CD4-positive, alpha-beta T cell (primary cell): ENCODE measurements at regions of chr7 and their contacts with region 1.

Region 1: GRCh38 chr7:26500749-26501352 is 209.2 kb downstream of the SNX10 start:
- DNase-seq: peak in 3 of 14 experiments; percentile 23 to 39 (median 31)
- ATAC-seq: no peak
- H3K4me3 ChIP-seq: no peak overlapping the region
- H3K4me3 Mint-ChIP-seq: no peak overlapping the region
- H3K27ac ChIP-seq: no peak overlapping the region
- H3K27ac Mint-ChIP-seq: no peak overlapping the region
- H3K4me1 ChIP-seq: no peaks in the 10 kb centered on the region
- H3K4me1 Mint-ChIP-seq: no peaks in the 10 kb centered on the region
- H3K27me3 ChIP-seq: peaks cover 3% of the 10 kb centered on the region in 2 experiments
- H3K27me3 Mint-ChIP-seq: peaks cover 8% of the 10 kb centered on the region
- CTCF ChIP-seq: peak; percentile 46

Region 2: DNA sequence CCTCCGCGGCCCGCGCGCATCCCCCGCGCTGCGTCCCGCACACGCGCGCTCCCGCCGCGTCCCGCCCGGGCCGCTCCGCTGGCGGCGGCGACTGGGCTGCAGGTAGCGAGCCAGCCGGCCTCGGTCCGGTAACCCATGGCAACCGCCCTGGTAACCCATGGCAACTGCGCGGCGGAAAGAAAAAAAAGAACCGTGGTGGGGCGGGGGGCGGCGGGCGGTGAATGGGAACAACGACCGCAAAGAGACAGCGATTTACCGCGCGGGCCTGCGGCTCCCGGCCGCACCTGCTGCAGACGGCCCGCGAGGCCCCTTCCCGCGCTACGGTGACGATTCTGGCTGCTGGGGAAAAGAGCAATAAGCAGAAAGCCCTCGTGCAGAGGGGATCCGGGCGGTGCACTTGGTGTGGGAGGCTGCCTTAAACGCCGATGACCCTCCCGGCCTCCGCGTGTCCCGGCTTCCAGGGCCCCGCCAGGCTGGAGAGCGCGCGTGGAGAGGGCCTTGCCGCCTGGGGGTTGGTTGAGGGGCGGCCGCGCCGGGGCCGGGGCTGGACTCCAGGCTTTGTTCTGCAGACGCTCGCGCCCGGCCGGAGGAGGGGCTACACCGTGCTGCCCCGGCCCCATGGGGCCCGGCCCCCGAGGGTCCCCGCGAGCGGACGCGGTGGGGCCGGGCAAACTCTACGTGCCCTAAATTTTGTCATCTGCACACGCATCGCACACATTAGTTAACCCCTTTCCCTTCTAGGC is 124.5 kb before region 1 on chr7:
- CTCF ChIA-PET with region 1: no interaction called
- POLR2A ChIA-PET with region 1: no interaction called
- intact Hi-C with region 1: loop called in 1 of 2 experiments (anchors 5 kb)
- DNase-seq: peak in 7 of 14 experiments; percentile 6 to 61 (median 32)
- ATAC-seq: peak; percentile 25
- H3K4me3 ChIP-seq: peak overlapping the region; percentile 58
- H3K4me3 Mint-ChIP-seq: peak overlapping the region; percentile 84
- H3K27ac ChIP-seq: no peak overlapping the region
- H3K27ac Mint-ChIP-seq: no peak overlapping the region
- H3K4me1 ChIP-seq: peaks cover 17% of the 10 kb centered on the region
- H3K4me1 Mint-ChIP-seq: peaks cover 10% of the 10 kb centered on the region
- H3K27me3 ChIP-seq: peaks cover 6 to 31% of the 10 kb centered on the region in 2 experiments
- H3K27me3 Mint-ChIP-seq: peaks cover 70% of the 10 kb centered on the region
- CTCF ChIP-seq: no peak

Region 3: DNA sequence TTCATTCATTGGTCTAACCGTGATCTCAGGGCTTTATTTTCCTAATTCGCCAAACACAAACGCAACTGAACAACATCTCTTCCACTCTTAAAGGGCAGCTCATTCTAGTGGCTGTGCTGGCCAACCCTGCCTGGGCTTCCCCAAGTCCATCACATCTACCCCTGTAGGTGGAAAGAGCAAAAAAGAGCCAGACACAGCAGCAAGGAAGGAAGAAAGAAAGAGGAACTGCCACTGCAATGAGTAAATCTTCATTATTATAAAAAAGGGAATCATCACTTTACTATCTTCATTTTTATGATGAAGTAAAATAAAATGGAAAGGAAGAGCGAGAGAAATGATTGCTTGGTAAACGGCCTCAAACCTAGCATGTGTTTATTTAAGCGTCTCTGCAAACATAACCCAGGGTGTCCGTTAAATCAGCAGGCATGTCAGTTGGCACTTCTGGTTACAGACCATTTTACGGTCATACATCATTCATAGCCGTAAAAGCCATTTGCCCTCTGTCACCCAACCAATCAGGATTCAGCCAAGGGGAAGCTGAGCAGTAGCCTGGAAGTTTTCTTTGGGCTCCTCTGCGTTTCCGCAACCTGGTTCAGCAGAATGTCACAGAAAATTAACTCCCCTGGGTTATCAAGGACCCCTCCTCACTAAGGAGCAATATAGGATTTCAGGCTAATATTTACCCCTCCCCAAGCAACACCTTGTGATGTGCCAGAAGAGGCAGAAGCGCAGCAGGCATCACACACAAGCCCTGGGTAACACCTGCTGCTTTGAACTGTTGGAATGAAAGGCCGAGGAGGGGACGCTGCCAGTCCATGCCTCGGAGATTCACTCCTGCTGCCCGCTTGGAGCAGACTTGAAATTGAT is 24.8 kb after region 1 on chr7:
- CTCF ChIA-PET with region 1: no interaction called
- POLR2A ChIA-PET with region 1: no interaction called
- intact Hi-C with region 1: no loop called
- DNase-seq: no peak
- ATAC-seq: no peak
- H3K4me3 ChIP-seq: no peak overlapping the region
- H3K4me3 Mint-ChIP-seq: no peak overlapping the region
- H3K27ac ChIP-seq: no peak overlapping the region
- H3K27ac Mint-ChIP-seq: no peak overlapping the region
- H3K4me1 ChIP-seq: no peaks in the 10 kb centered on the region
- H3K4me1 Mint-ChIP-seq: no peaks in the 10 kb centered on the region
- H3K27me3 ChIP-seq: peaks cover 0 to 6% of the 10 kb centered on the region in 2 experiments
- H3K27me3 Mint-ChIP-seq: peaks cover 20% of the 10 kb centered on the region
- CTCF ChIP-seq: no peak

Region 4: DNA sequence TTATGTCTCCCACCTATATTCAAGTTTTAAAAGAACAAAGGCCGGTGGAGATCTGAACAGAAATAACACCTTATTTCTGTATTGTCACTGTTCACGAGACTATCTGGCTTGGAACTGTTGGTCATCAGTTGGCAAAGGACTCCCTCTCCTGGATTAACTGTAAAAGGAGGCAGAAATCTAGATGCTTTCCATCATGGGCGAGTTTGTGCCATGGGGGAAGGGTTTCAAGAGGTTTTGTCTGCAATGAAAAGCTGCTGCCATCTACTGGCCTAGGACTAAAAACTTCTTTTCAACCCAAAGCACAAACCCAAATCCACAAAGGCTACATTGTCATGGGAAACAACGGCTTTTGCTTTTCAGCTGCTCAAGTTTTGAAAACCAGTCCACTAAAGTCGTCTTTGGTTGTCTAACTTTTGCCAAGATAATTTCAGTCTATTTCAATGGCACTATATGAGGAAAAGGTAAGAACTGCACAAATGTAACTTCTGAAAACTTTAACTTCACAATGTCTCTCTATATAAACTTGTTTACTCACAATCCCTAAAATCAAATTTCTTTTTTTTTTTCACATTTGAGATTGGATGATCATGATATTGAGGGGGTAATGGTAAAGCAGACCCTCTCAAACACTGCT is 166.8 kb after region 1 on chr7:
- CTCF ChIA-PET with region 1: no interaction called
- POLR2A ChIA-PET with region 1: no interaction called
- intact Hi-C with region 1: loop called in 1 of 2 experiments (anchors 10 kb)
- DNase-seq: peak in 12 of 14 experiments; percentile 15 to 82 (median 30)
- ATAC-seq: peak; percentile 61
- H3K4me3 ChIP-seq: no peak overlapping the region
- H3K4me3 Mint-ChIP-seq: no peak overlapping the region
- H3K27ac ChIP-seq: no peak overlapping the region
- H3K27ac Mint-ChIP-seq: no peak overlapping the region
- H3K4me1 ChIP-seq: no peaks in the 10 kb centered on the region
- H3K4me1 Mint-ChIP-seq: peaks cover 19% of the 10 kb centered on the region
- H3K27me3 ChIP-seq: no peaks in the 10 kb centered on the region
- H3K27me3 Mint-ChIP-seq: peaks cover 15% of the 10 kb centered on the region
- CTCF ChIP-seq: peak; percentile 75